ENCODE measurements at regions of chr1 and their contacts with region 1.

Region 1: GRCh38 chr1:52098139-52098871 is 42.2 kb downstream of the BTF3L4 start:
- DNase-seq: no peak
- H3K4me3 ChIP-seq: no peak overlapping the region
- H3K27ac ChIP-seq: no peak overlapping the region
- H3K4me1 ChIP-seq: no peaks in the 10 kb centered on the region
- H3K27me3 ChIP-seq: no peaks in the 10 kb centered on the region
- CTCF ChIP-seq: no peak

Region 2: GRCh38 chr1:52164604-52165003 is 66.3 kb after region 1 on chr1:
- CTCF ChIA-PET with region 1: no interaction called
- dilution Hi-C with region 1: loop called (anchors 5 kb)
- in situ Hi-C with region 1: no loop called
- intact Hi-C with region 1: no loop called
- DNase-seq: no peak
- H3K4me3 ChIP-seq: no peak overlapping the region
- H3K27ac ChIP-seq: no peak overlapping the region
- H3K4me1 ChIP-seq: peaks cover 1% of the 10 kb centered on the region
- H3K27me3 ChIP-seq: no peaks in the 10 kb centered on the region
- CTCF ChIP-seq: no peak

Region 3: GRCh38 chr1:52237430-52237829 is 139.1 kb after region 1 on chr1:
- CTCF ChIA-PET with region 1: no interaction called
- dilution Hi-C with region 1: no loop called
- in situ Hi-C with region 1: no loop called
- intact Hi-C with region 1: no loop called
- DNase-seq: peak; percentile 82
- H3K4me3 ChIP-seq: no peak overlapping the region
- H3K27ac ChIP-seq: peak overlapping the region; percentile 72
- H3K4me1 ChIP-seq: peaks cover 26% of the 10 kb centered on the region
- H3K27me3 ChIP-seq: no peaks in the 10 kb centered on the region
- CTCF ChIP-seq: no peak

Region 4: GRCh38 chr1:52306227-52307006 is 208.1 kb after region 1 on chr1:
- CTCF ChIA-PET with region 1: no interaction called
- dilution Hi-C with region 1: loop called (anchors 5 kb)
- in situ Hi-C with region 1: no loop called
- intact Hi-C with region 1: no loop called
- DNase-seq: no peak
- H3K4me3 ChIP-seq: no peak overlapping the region
- H3K27ac ChIP-seq: no peak overlapping the region
- H3K4me1 ChIP-seq: no peaks in the 10 kb centered on the region
- H3K27me3 ChIP-seq: no peaks in the 10 kb centered on the region
- CTCF ChIP-seq: no peak